Kidney (tissue), 22 donors: ENCODE measurements at regions of chr1 and their contacts with region 1.

Region 1: GRCh38 chr1:202132031-202132907 is 9.6 kb downstream of the GPR37L1 start:
- DNase-seq: peak in 3 of 5 donors; percentile 58 to 92 (median 61)
- H3K4me3 ChIP-seq: peak overlapping the region in 1 of 3 donors; percentile 25
- H3K27ac ChIP-seq: peak overlapping the region; percentile 87 to 89
- H3K4me1 ChIP-seq: peaks cover 0 to 17% (median 17%) of the 10 kb centered on the region in 3 donors
- H3K27me3 ChIP-seq: no peaks in the 10 kb centered on the region
- CTCF ChIP-seq: no peak

Region 2: DNA sequence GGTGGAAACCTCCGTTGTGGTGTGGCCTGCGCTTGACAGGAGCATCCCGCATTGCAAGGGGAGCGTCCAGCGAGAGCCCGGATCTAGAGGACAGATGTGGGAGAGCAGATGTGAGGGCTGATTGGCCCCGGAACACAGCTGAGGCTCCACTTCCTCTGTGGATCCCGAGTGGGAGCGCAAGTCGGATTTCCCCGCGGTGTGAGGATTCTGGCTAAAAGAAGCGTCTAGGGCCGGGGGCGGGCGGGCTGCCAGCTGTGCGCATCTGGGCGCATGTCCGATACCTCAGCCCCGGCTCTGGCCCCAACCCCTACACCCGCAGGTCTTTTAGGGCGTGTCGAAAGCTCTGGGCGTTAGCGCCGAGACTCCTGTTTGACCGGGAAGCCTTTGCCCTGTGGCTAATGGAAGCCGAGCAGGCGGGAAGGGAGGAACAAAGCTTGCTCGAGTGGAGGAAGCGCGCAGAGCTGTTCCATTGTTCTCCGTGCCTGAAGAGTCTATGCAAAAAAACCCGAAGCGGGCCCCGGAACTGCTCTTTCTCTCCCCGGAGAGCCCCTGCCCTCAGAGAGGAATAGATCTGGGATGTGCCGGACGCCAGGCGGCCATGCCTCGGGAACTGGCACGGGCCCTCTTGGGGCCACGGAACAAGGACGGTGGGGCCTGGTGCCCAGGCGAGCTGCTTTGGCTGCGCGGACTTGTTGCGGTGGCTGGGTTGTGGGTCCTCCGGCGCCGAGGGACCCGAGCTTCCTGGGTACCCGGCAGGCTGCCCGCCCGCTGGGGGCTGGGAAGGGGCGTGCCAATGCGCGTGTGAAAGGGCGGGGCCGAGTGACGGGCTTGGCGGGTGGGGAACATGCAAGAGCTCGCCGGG is 482.3 kb before region 1 on chr1:
- intact Hi-C with region 1: no loop called
- DNase-seq: peak; percentile 86 to 94 (median 93)
- H3K4me3 ChIP-seq: peak overlapping the region; percentile 37 to 55 (median 50)
- H3K27ac ChIP-seq: no peak overlapping the region
- H3K4me1 ChIP-seq: peaks cover 0 to 11% (median 0%) of the 10 kb centered on the region in 3 donors
- H3K27me3 ChIP-seq: peaks cover 3% of the 10 kb centered on the region
- CTCF ChIP-seq: no peak

Region 3: DNA sequence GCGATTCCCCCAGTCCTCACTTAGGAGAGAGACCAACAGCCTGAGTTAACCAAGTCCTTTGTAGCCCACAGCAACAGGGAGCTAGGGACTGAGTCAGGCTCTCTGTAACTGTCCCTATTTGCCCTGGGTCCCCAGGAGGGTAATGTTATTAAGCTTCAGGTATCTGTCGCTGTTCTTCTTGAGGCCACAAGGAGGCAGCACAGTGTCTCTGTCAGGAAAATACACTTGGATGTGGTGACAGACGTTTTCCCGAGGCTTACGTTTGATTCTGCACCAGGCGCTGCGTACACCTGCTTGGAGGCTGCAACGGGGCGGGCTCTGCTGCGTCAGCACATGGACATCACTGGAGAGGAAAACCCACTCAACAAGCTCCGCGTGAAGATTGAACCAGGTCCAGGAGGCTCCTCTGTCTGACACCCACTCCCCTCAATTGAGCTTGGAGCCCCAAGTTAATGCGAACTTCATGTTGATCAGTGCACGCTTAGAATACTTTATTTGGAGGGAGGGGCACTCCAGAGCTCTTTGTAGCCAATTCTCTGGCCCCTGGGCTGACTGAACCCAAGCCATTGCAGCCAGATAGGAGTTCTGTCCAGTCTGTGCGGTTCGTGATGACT is 132.5 kb before region 1 on chr1:
- intact Hi-C with region 1: loop called (anchors 5 kb)
- DNase-seq: peak in 2 of 5 donors; percentile 37 to 69
- H3K4me3 ChIP-seq: no peak overlapping the region
- H3K27ac ChIP-seq: no peak overlapping the region
- H3K4me1 ChIP-seq: no peaks in the 10 kb centered on the region
- H3K27me3 ChIP-seq: no peaks in the 10 kb centered on the region
- CTCF ChIP-seq: peak; percentile 71

Region 4: DNA sequence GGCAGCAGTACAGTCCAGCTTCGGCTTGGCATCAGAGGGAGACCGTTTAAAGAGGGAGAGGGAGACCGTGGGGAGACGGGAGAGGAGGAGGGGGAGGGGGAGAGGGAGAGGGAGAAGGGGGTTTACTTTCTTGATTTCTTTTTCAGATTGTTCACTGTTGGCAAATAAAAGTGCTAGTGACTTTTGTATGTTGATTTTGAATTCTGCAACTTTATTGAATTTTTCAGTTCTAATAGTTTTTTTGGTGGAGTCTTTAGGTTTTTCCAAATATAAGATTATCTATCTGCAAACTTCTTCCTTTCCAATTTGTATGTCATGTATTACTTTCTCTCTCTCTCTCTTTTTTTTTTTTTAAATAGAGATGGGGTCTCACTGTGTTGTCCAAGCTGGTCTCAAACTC is 320.2 kb after region 1 on chr1:
- intact Hi-C with region 1: no loop called
- DNase-seq: no peak
- H3K4me3 ChIP-seq: no peak overlapping the region
- H3K27ac ChIP-seq: no peak overlapping the region
- H3K4me1 ChIP-seq: no peaks in the 10 kb centered on the region
- H3K27me3 ChIP-seq: no peaks in the 10 kb centered on the region
- CTCF ChIP-seq: no peak